ENCODE measurements at regions of chr10 and their contacts with region 1.

Region 1: GRCh38 chr10:124418726-124419501 is at the start of gene OAT:
- DNase-seq: peak; percentile 99
- H3K4me3 Mint-ChIP-seq: peak within 1 kb of the TSS; percentile 83
- H3K27ac Mint-ChIP-seq: peak within 1 kb of the TSS; percentile 65
- H3K4me1 Mint-ChIP-seq: peaks cover 9% of the 10 kb centered on the region
- H3K27me3 Mint-ChIP-seq: peaks cover 12% of the 10 kb centered on the region
- total RNA-seq, gene OAT: 40.2 and 41.0 TPM in 2 replicates

Region 2: DNA sequence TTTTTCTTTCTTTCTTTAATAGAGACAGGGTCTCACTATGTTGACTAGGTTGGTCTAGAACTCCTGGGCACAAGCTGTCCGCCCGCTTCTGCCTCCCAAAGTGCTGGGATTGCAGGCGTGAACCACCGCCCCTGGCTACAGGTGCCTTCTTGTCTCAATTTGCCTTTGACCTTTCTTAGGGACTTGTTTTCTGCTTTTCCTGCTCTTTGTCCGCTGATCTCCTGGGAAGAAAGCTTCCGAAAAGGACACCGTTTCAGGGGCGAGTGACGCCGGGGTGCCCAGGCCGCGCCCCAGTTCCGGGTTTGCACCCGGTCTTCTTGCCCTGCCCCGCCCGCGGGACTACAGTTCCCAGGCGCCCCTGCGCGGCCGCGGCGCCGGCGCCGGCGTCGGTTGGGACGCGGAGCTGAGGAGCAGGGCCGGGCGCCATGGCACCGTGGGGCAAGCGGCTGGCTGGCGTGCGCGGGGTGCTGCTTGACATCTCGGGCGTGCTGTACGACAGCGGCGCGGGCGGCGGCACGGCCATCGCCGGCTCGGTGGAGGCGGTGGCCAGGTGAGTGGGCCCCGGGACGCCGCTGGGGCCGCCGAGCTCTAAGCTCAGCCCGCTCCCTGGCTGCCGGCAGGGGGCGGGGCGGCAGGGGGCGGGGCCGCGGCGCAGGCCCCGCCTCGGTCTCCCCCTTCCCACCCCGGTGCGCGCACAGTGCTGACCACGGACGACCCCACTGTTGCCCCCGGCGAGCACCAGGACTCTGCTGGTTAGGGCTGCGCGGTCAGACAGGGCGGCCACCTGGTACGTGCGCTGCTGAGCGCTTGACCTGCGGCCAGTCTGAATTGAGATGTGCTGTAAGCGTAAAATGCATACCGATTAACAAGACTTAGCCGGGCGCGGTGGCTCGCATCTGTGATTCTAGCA is 42.8 kb after region 1 on chr10 and contains the start of gene LHPP:
- intact Hi-C with region 1: loop called (anchors 1 kb)
- DNase-seq: peak; percentile 97
- H3K4me3 Mint-ChIP-seq: peak within 1 kb of the TSS; percentile 77
- H3K27ac Mint-ChIP-seq: peak within 1 kb of the TSS; percentile 92
- H3K4me1 Mint-ChIP-seq: peaks cover 24% of the 10 kb centered on the region
- H3K27me3 Mint-ChIP-seq: peaks cover 11% of the 10 kb centered on the region
- total RNA-seq, gene LHPP: 8.1 and 8.6 TPM in 2 replicates

Measured in activated CD4-positive, alpha-beta T cell treated with anti-CD3 and anti-CD28 coated beads, Interleukin-2, amount 10 ng/mL, durations not matched to agents 24 days and 14 days (primary cell).